Mammary epithelial cell (primary cell): ENCODE measurements at regions of chr1 and their contacts with region 1.

Region 1: GRCh38 chr1:36622741-36623648 is 140.3 kb upstream of the CSF3R start:
- DNase-seq: no peak
- H3K4me3 ChIP-seq: no peak overlapping the region
- H3K27ac ChIP-seq: no peak overlapping the region
- H3K4me1 ChIP-seq: no peaks in the 10 kb centered on the region
- H3K27me3 ChIP-seq: no peaks in the 10 kb centered on the region
- CTCF ChIP-seq: no peak

Region 2: DNA sequence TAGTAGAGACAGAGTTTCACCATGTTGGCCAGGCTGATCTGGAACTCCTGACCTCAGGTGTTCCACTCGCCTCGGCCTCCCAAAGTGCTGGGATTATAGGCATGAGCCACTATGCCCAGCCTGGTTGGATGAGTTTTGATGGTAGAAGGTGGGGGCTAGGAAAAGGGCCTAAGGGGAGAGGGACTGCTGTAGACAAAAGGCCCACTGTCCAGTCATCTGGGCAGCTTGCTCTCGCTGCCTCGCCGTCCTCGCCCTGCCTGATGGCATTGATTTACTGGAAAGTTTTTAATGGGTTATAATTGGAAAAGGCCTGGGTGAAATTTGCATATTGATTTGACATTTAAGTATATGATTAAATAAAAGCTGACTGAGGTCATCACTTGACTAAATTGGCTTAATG is 34.8 kb after region 1 on chr1:
- CTCF ChIA-PET with region 1: no interaction called
- dilution Hi-C with region 1: loop called (anchors 5 kb)
- in situ Hi-C with region 1: no loop called
- intact Hi-C with region 1: no loop called
- DNase-seq: no peak
- H3K4me3 ChIP-seq: no peak overlapping the region
- H3K27ac ChIP-seq: no peak overlapping the region
- H3K4me1 ChIP-seq: no peaks in the 10 kb centered on the region
- H3K27me3 ChIP-seq: no peaks in the 10 kb centered on the region
- CTCF ChIP-seq: no peak